PC-3 (cell line): ENCODE measurements at regions of chr4 and their contacts with region 1.

Region 1: DNA sequence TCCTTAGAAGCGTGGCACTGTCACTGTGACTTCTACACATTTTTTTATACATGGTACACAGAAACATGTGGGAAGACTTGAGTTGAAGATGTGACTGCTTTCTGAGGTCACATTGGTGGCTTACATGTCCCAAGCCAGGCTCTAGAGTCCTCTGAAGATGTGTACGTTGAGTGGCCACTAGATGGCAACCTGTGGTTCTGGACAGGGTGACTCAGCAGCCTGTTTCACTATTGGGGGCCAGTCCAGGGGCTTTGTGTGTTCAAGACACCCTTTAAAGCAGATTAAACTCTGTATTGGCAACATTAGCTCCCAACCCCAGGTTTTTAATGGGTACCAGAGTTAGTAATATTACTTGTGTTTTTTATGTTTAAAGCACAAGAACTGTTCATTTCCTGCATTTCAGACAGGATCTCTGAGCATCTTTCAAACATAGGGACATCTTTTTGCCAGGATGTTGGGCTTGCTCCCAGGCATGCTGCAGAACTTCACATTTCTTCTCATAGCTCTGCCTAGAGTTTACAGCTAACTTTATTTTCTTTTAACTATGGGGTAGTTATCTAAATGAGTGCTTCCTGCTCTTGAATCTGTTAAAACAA is 53.0 kb downstream of the DCUN1D4 start:
- DNase-seq: peak; percentile 80
- ATAC-seq: peak; percentile 74
- H3K4me3 ChIP-seq: no peak overlapping the region
- H3K27ac ChIP-seq: no peak overlapping the region
- H3K4me1 ChIP-seq: peaks cover 26% of the 10 kb centered on the region
- H3K27me3 ChIP-seq: no peaks in the 10 kb centered on the region
- CTCF ChIP-seq: peak; percentile 97

Region 2: DNA sequence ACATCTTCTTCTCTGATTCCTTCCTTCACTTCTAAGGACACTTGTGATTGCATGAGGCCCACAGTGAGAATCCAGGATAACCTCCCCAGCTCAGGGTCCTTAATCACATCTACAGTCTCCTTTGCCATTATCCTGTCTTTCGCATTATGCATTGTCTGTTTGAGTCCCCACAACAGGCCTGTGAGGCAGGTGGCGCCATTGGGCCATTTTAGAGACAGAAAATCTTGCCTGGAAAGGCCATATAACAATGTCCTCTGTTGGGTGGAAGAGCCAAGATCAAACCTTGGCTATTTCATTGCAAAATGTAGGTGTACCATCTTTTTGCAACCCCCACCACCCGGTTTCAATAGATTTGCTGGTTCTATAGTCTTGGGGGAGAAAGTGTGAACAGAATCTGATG is 64.8 kb before region 1 on chr4:
- CTCF ChIA-PET with region 1: no interaction called
- POLR2A ChIA-PET with region 1: no interaction called
- intact Hi-C with region 1: loop called (anchors 2 kb)
- DNase-seq: peak; percentile 82
- ATAC-seq: peak; percentile 98
- H3K4me3 ChIP-seq: no peak overlapping the region
- H3K27ac ChIP-seq: no peak overlapping the region
- H3K4me1 ChIP-seq: no peaks in the 10 kb centered on the region
- H3K27me3 ChIP-seq: no peaks in the 10 kb centered on the region
- CTCF ChIP-seq: peak; percentile 95

Region 3: GRCh38 chr4:51842554-51843308 is 53.2 kb before region 1 on chr4 and contains the start of gene DCUN1D4:
- CTCF ChIA-PET with region 1: no interaction called
- POLR2A ChIA-PET with region 1: no interaction called
- intact Hi-C with region 1: loop called (anchors 1 kb)
- DNase-seq: peak; percentile 100
- ATAC-seq: peak; percentile 87
- H3K4me3 ChIP-seq: peak within 1 kb of the TSS; percentile 80
- H3K27ac ChIP-seq: peak within 1 kb of the TSS; percentile 77
- H3K4me1 ChIP-seq: peaks cover 25% of the 10 kb centered on the region
- H3K27me3 ChIP-seq: no peaks in the 10 kb centered on the region
- CTCF ChIP-seq: peak; percentile 16; the same call in 1 of the 2 replicates
- total RNA-seq, gene DCUN1D4: 25.5 and 44.8 TPM in 2 replicates

Region 4: GRCh38 chr4:51943221-51943934 is 47.5 kb after region 1 on chr4:
- CTCF ChIA-PET with region 1: no interaction called
- POLR2A ChIA-PET with region 1: no interaction called
- intact Hi-C with region 1: loop called (anchors 2 kb)
- DNase-seq: peak; percentile 88
- ATAC-seq: peak; percentile 69
- H3K4me3 ChIP-seq: peak overlapping the region; percentile 50
- H3K27ac ChIP-seq: peak overlapping the region; percentile 48
- H3K4me1 ChIP-seq: peaks cover 27% of the 10 kb centered on the region
- H3K27me3 ChIP-seq: no peaks in the 10 kb centered on the region
- CTCF ChIP-seq: no peak

Region 5: GRCh38 chr4:52019936-52020657 is 124.2 kb after region 1 on chr4 and contains the start of gene LRRC66:
- CTCF ChIA-PET with region 1: no interaction called
- POLR2A ChIA-PET with region 1: no interaction called
- intact Hi-C with region 1: loop called (anchors 2 kb)
- DNase-seq: peak; percentile 83
- ATAC-seq: peak; percentile 95
- H3K4me3 ChIP-seq: peak within 1 kb of the TSS; percentile 29; the same call in 1 of the 2 replicates
- H3K27ac ChIP-seq: peak within 1 kb of the TSS; percentile 60
- H3K4me1 ChIP-seq: peaks cover 19% of the 10 kb centered on the region
- H3K27me3 ChIP-seq: no peaks in the 10 kb centered on the region
- CTCF ChIP-seq: no peak
- total RNA-seq, gene LRRC66: 0.58 and 1.1 TPM in 2 replicates

Region 6: DNA sequence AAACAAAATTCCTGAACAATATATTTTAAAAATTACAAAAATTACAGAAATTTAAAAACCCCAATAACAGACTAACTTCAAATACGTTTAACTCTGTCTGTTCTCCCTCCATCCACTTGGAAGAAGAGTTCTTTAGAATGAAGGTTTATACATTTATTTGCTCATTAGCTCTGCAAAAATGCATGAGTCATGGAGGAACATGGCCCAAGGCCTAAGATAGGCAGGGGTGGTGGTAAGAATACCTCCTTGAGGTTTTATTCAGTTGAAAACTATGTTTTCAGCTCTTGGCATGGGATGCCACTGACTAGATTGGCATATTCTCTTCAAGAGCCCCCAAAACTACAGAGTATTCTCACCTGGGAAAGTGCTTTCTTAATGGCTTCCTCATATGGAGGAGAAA is 133.1 kb after region 1 on chr4:
- CTCF ChIA-PET with region 1: no interaction called
- POLR2A ChIA-PET with region 1: no interaction called
- intact Hi-C with region 1: loop called (anchors 1 kb)
- DNase-seq: peak; percentile 96
- ATAC-seq: peak; percentile 99
- H3K4me3 ChIP-seq: no peak overlapping the region
- H3K27ac ChIP-seq: 0 out of 2 replicates have a peak overlapping the region, but pooled peaks have one; percentile 16
- H3K4me1 ChIP-seq: peaks cover 14% of the 10 kb centered on the region
- H3K27me3 ChIP-seq: no peaks in the 10 kb centered on the region
- CTCF ChIP-seq: no peak

Region 7: GRCh38 chr4:53614591-53614990 is 1718.7 kb after region 1 on chr4:
- CTCF ChIA-PET with region 1: no interaction called
- POLR2A ChIA-PET with region 1: no interaction called
- intact Hi-C with region 1: no loop called
- DNase-seq: peak; percentile 72
- ATAC-seq: peak; percentile 71
- H3K4me3 ChIP-seq: no peak overlapping the region
- H3K27ac ChIP-seq: no peak overlapping the region
- H3K4me1 ChIP-seq: no peaks in the 10 kb centered on the region
- H3K27me3 ChIP-seq: no peaks in the 10 kb centered on the region
- CTCF ChIP-seq: peak; percentile 72